Heart left ventricle (tissue), 16 donors: ENCODE measurements at regions of chr7 and their contacts with region 1.

Region 1: DNA sequence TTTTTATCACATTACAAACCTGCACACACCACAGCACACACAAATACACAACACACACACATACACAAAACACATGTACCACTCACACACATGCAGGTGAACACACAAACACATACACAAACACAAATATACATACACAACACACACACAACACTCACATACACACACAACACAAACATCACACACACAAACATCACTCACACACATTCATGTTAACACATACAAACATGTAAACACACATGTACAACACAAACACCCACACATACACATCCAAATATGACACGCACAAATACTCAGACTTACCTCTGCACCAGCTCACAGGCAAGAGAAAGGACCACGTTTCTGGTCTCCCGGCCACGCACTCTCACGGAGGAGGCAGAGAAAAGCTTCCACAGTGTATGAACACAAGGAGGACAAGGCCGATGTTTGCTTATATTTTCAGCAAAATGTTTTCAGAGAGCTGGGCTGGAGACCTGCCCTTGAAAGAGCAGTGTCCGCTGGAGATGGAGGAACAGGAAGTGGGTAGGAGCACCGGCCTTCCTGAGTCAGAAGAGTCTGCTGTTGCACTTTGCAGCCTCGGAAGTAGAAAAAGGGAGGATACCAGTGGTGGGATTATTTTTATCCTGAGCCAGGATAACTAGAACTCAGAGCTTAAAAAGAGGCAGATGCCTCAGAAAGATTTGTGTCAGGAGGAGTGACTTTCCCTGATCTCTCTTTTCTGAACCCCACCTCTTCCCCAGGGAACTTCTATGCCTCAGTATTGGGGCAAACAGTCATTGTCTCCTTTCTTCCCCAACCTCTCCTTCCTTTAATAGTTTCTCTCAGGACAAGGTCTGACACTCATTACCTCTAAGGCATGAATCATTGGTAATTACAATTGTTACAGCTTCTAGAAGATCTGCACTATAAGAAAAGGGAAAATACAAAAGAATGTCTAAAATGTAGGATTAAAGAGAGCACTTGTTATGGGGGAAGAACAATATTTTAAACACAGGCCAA is at the start of gene GIMAP6:
- DNase-seq: peak in 4 of 5 donors; percentile 45 to 56 (median 52)
- ATAC-seq: peak in 3 of 4 donors; percentile 22 to 38 (median 30)
- H3K4me3 ChIP-seq: peak within 1 kb of the TSS; percentile 26 to 69 (median 54)
- H3K27ac ChIP-seq: peak within 1 kb of the TSS; percentile 63 to 96 (median 93)
- H3K4me1 ChIP-seq: peaks cover 0 to 61% (median 35%) of the 10 kb centered on the region in 12 donors
- H3K27me3 ChIP-seq: no peaks in the 10 kb centered on the region
- CTCF ChIP-seq: no peak
- POLR2A ChIP-seq: no peak
- total RNA-seq, gene GIMAP6: 20.3 to 52.7 (median 24.4) TPM

Region 2: DNA sequence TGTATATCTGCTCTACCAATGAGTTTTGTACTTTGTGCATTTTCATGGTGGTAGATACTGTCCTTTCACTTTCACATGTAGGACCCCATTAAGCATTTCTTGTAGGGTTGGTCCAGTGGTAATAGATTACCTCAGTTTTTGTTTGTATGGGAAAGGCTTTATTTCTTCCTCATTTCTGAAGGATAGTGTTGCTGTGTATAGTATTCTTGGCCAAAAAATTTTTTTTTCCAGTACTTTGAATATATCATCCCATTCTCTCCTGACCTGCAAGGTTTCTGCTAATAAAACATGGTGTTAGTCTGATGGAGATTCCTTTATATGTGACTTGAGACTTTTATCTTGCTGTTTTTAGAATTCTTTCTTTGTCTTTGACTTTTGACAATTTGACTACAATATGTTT is 169.8 kb before region 1 on chr7:
- intact Hi-C with region 1: no loop called
- DNase-seq: no peak
- ATAC-seq: no peak
- H3K4me3 ChIP-seq: no peak overlapping the region
- H3K27ac ChIP-seq: no peak overlapping the region
- H3K4me1 ChIP-seq: peaks cover 0 to 41% (median 0%) of the 10 kb centered on the region in 12 donors
- H3K27me3 ChIP-seq: no peaks in the 10 kb centered on the region
- CTCF ChIP-seq: no peak
- POLR2A ChIP-seq: no peak

Region 3: DNA sequence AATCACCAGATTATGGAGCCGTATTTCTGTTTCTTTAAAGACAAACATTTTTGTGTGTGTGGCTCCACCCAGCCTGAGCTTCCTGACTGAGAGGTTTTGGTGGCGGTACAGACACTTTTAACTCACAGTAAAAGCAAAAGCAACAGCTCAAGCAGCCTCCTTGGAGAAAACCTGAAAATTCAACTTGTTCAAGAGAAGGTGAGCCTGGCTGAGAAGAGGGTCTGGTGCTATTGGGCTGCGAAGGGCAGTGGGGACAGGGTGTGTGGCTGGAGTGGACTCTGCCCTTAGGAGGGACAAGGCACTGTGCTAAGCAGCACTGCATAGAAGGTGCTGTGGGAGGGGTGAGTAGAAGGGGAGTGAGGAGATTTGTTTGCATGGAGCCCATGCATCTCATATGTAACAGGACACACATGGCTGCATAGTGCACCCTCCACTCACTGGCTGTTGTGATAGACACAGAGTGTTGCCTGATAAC is 117.4 kb before region 1 on chr7 and contains the start of gene GIMAP7:
- intact Hi-C with region 1: loop called in 3 of 10 experiments (anchors 5 kb)
- DNase-seq: peak in 3 of 5 donors; percentile 34 to 38 (median 35)
- ATAC-seq: peak; percentile 75 to 87 (median 78)
- H3K4me3 ChIP-seq: peak within 1 kb of the TSS; percentile 24 to 69 (median 60)
- H3K27ac ChIP-seq: peak within 1 kb of the TSS; percentile 66 to 92 (median 85)
- H3K4me1 ChIP-seq: peaks cover 0 to 21% (median 2%) of the 10 kb centered on the region in 12 donors
- H3K27me3 ChIP-seq: no peaks in the 10 kb centered on the region
- CTCF ChIP-seq: no peak
- POLR2A ChIP-seq: peak in 1 of 2 donors; percentile 68
- total RNA-seq, gene GIMAP7: 14.4 to 46.8 (median 18.9) TPM

Region 4: GRCh38 chr7:150586785-150587152 is 45.4 kb before region 1 on chr7:
- intact Hi-C with region 1: loop called in 1 of 10 experiments (anchors 5 kb)
- DNase-seq: peak in 1 of 5 donors; percentile 43
- ATAC-seq: peak; percentile 86 to 98 (median 90)
- H3K4me3 ChIP-seq: peak overlapping the region in 1 of 12 donors; percentile 10
- H3K27ac ChIP-seq: peak overlapping the region; percentile 65 to 93 (median 82)
- H3K4me1 ChIP-seq: peaks cover 0 to 46% (median 22%) of the 10 kb centered on the region in 12 donors
- H3K27me3 ChIP-seq: no peaks in the 10 kb centered on the region
- CTCF ChIP-seq: no peak
- POLR2A ChIP-seq: peak in 1 of 2 donors; percentile 35

Region 5: GRCh38 chr7:150685219-150686029 is 53.3 kb after region 1 on chr7 and contains the start of gene GIMAP2:
- intact Hi-C with region 1: loop called in 2 of 10 experiments (anchors 5 to 10 kb)
- DNase-seq: peak in 1 of 5 donors; percentile 29
- ATAC-seq: peak in 3 of 4 donors; percentile 54 to 92 (median 83)
- H3K4me3 ChIP-seq: peak within 1 kb of the TSS; percentile 2 to 81 (median 56)
- H3K27ac ChIP-seq: peak within 1 kb of the TSS; percentile 41 to 98 (median 84)
- H3K4me1 ChIP-seq: peaks cover 0 to 51% (median 7%) of the 10 kb centered on the region in 12 donors
- H3K27me3 ChIP-seq: no peaks in the 10 kb centered on the region
- CTCF ChIP-seq: no peak
- POLR2A ChIP-seq: no peak
- total RNA-seq, gene GIMAP2: 2.1 to 23.5 (median 4.9) TPM

Region 6: GRCh38 chr7:150737265-150738055 is 105.3 kb after region 1 on chr7 and contains the start of gene GIMAP5:
- intact Hi-C with region 1: loop called in 8 of 10 experiments (anchors 1 to 10 kb)
- DNase-seq: peak in 2 of 5 donors; percentile 43 to 55
- ATAC-seq: peak; percentile 66 to 83 (median 73)
- H3K4me3 ChIP-seq: peak within 1 kb of the TSS; percentile 43 to 78 (median 62)
- H3K27ac ChIP-seq: peak within 1 kb of the TSS; percentile 71 to 96 (median 86)
- H3K4me1 ChIP-seq: peaks cover 0 to 54% (median 15%) of the 10 kb centered on the region in 12 donors
- H3K27me3 ChIP-seq: no peaks in the 10 kb centered on the region
- CTCF ChIP-seq: no peak
- POLR2A ChIP-seq: peak in 1 of 2 donors; percentile 54
- total RNA-seq, gene GIMAP5: 6.4 to 40.4 (median 12.2) TPM